ENCODE measurements at regions of chrX and their contacts with region 1.

Region 1: GRCh38 chrX:108199691-108200090 is 108.1 kb downstream of the ATG4A start:
- DNase-seq: peak; percentile 41
- H3K4me3 Mint-ChIP-seq: no peak overlapping the region
- H3K27ac Mint-ChIP-seq: no peak overlapping the region
- H3K4me1 Mint-ChIP-seq: no peaks in the 10 kb centered on the region
- H3K27me3 Mint-ChIP-seq: peaks cover 97% of the 10 kb centered on the region
- CTCF ChIP-seq: peak; percentile 45

Region 2: DNA sequence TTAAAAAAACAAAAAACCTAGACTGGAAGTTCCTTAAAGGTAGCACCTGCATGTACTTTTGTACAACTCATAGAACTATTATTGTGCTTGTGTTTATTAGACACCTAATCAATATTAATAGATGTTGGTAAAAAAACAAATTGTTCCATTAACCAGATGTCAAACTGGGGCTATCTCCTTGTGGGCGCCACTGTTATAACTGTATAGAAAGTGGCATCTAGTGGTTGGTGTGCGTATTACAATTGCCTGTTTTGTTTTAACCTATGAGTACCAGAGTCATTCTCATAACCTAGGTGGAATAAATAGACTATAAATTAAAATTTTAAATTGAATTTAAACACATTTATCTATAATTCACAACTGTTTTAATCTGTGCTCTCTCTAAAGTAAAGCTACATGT is 337.3 kb after region 1 on chrX:
- CTCF ChIA-PET with region 1: interaction called, 5 read pairs
- POLR2A ChIA-PET with region 1: no interaction called
- intact Hi-C with region 1: loop called (anchors 1 kb)
- DNase-seq: peak; percentile 56
- H3K4me3 Mint-ChIP-seq: no peak overlapping the region
- H3K27ac Mint-ChIP-seq: no peak overlapping the region
- H3K4me1 Mint-ChIP-seq: no peaks in the 10 kb centered on the region
- H3K27me3 Mint-ChIP-seq: peaks cover 59% of the 10 kb centered on the region
- CTCF ChIP-seq: peak; percentile 71